HepG2 (cell line): ENCODE measurements at regions of chr20 and their contacts with region 1.

Region 1: GRCh38 chr20:63290677-63291472 is 2.1 kb upstream of the COL20A1 start:
- DNase-seq: peak; percentile 41
- ATAC-seq: peak; percentile 71
- H3K4me3 ChIP-seq: peak overlapping the region in 1 of 3 experiments; percentile 13; a peak in 1 of 6 replicates
- H3K27ac ChIP-seq: no peak overlapping the region
- H3K4me1 ChIP-seq: peaks cover 15% of the 10 kb centered on the region
- H3K27me3 ChIP-seq: peaks cover 12 to 37% of the 10 kb centered on the region in 2 experiments; a peak in 4 of 5 replicates
- CTCF ChIP-seq: peak; percentile 96
- EP300 ChIP-seq: no peak
- POLR2A ChIP-seq: peak; percentile 2 to 56; a peak in 2 of 4 replicates
- RAD21 ChIP-seq: peak; percentile 86

Region 2: DNA sequence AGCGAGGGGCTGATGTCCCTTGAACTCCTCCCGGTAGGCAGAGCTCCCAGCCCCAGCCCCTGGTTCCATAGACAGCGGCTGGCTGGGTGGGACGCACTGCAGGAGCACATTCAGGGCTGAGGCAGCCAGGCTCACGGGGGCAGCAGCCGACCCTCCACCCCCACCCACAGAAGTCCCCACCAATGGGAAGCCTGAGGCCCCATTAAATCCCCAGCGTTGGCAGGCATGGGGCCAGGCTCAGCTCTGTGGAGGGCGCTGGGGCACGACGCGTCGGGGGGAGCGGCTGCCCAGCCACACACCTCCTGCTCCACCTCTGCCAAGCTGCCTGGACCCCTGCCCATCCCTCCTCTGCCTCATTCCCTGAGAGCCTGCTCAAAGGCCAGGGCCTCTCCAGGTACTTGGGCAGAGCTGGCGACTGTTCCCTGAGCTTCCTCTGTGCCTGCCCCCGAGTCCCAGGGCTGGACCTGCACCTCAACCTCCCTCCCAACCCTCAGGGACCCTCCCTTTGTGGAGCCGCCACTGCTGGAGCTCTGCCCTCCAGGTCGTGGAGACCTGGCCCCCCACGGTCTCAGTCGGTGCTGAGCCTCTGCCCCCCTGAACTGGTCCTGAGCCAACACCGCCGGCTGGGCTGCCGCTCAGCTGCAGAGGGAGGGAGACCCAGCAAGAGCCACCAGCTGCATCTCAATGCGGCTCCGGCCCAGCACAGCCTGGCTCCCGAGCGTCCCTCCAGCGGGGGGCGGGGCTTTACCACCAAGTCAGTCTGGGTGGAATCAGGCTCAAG is 61.1 kb after region 1 on chr20:
- CTCF ChIA-PET with region 1: no interaction called
- POLR2A ChIA-PET with region 1: no interaction called
- in situ Hi-C with region 1: no loop called
- intact Hi-C with region 1: no loop called
- DNase-seq: no peak
- ATAC-seq: peak; percentile 6; the same call in 2 of the 3 replicates
- H3K4me3 ChIP-seq: no peak overlapping the region
- H3K27ac ChIP-seq: no peak overlapping the region
- H3K4me1 ChIP-seq: no peaks in the 10 kb centered on the region
- H3K27me3 ChIP-seq: peaks cover 7 to 14% of the 10 kb centered on the region in 2 experiments; a peak in 3 of 5 replicates
- CTCF ChIP-seq: no peak
- EP300 ChIP-seq: no peak
- POLR2A ChIP-seq: no peak
- RAD21 ChIP-seq: no peak

Region 3: GRCh38 chr20:63387023-63387792 is 96.3 kb after region 1 on chr20:
- CTCF ChIA-PET with region 1: no interaction called
- POLR2A ChIA-PET with region 1: no interaction called
- in situ Hi-C with region 1: no loop called
- intact Hi-C with region 1: loop called (anchors 5 kb)
- DNase-seq: no peak
- ATAC-seq: no peak
- H3K4me3 ChIP-seq: no peak overlapping the region
- H3K27ac ChIP-seq: no peak overlapping the region
- H3K4me1 ChIP-seq: no peaks in the 10 kb centered on the region
- H3K27me3 ChIP-seq: peaks cover 11 to 27% of the 10 kb centered on the region in 2 experiments; a peak in 4 of 5 replicates
- CTCF ChIP-seq: no peak
- EP300 ChIP-seq: no peak
- POLR2A ChIP-seq: no peak
- RAD21 ChIP-seq: no peak